Gastrocnemius medialis (tissue), 4 donors: ENCODE measurements at regions of chr2 and their contacts with region 1.

Region 1: GRCh38 chr2:161217597-161218185 is 57.5 kb downstream of the TANK start:
- DNase-seq: no peak
- ATAC-seq: no peak
- H3K4me3 ChIP-seq: no peak overlapping the region
- H3K27ac ChIP-seq: no peak overlapping the region
- H3K4me1 ChIP-seq: no peaks in the 10 kb centered on the region
- H3K27me3 ChIP-seq: no peaks in the 10 kb centered on the region
- CTCF ChIP-seq: no peak
- POLR2A ChIP-seq: no peak

Region 2: GRCh38 chr2:161265874-161266273 is 48.2 kb after region 1 on chr2:
- in situ Hi-C with region 1: loop called in 3 of 4 experiments (anchors 10 kb)
- intact Hi-C with region 1: no loop called
- DNase-seq: no peak
- ATAC-seq: no peak
- H3K4me3 ChIP-seq: no peak overlapping the region
- H3K27ac ChIP-seq: no peak overlapping the region
- H3K4me1 ChIP-seq: peaks cover 0 to 6% of the 10 kb centered on the region in 2 donors
- H3K27me3 ChIP-seq: no peaks in the 10 kb centered on the region
- CTCF ChIP-seq: no peak
- POLR2A ChIP-seq: no peak